ENCODE measurements at regions of chr13 and their contacts with region 1.

Region 1: DNA sequence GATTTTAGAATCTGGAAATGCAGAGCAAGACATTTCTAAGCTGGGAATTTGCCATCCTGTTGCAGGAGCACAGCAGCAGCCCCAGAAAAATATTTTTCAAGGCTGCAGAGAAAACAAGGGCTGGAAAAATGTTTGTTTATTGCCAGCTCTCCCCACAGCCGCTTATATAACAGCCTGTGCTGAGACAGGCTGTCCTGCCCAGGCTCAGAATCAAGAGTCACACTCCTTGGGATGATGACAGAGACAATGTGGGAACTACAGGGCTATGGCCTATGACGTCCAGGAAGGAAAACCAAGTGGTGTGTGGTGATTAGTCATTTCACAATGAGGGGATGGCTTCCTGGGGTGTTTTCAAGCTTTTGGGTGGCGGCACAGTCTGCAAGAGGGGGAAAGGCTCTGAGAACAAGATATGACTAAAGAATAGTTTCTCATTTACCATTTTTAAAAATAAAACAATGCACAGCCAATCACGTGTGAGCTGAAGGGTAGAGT is 136.3 kb upstream of the SERP2 start:
- DNase-seq: peak; percentile 91 to 94
- H3K4me3 ChIP-seq: no peak overlapping the region
- H3K27ac ChIP-seq: peak overlapping the region; percentile 88 to 91
- H3K4me1 ChIP-seq: peaks cover 0 to 59% (median 29%) of the 10 kb centered on the region in 4 donors
- H3K27me3 ChIP-seq: no peaks in the 10 kb centered on the region
- CTCF ChIP-seq: no peak

Region 2: DNA sequence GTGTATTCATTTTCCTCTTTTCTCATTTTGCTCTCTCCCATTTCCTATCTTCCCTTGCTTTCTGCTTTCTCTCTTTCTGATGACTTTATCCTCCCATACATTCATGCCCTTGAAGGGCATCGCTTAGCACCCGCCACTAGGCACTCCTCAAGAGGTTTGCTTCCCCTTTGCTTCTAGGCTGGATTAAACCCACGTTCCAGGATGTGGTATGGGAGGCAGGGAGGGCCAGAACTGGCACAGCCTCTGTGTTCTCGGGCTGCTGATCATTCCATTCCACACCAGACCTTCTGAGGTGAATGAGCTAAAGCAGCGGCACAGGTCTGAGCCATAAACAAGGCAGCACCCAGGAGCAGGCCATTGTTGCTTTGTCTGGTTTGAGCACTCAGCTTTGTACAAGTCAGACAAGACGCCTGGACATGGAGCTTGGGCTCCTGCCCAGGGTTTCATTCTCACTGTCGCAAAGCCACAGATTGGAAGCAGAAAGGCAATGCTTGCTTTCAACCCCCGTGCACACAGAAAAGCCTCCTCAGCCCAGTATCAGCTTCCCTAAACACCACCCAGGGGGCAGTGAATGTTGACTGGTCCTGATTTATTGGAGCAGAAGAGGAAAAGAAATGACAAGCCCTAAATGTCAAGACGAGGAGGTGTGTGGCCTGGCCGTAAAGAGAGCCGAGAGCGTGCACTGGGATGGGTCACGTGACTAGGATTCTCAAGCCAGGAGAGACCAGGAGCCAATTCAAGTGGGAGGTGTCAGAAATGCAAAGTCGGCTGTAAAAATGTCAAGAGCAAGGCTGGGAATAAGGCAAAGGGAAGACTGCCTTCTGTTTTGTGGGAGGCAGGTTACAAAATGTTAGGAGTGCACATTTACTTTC is 81.7 kb before region 1 on chr13:
- intact Hi-C with region 1: loop called (anchors 5 kb)
- DNase-seq: peak; percentile 70 to 88
- H3K4me3 ChIP-seq: peak overlapping the region; percentile 32 to 39
- H3K27ac ChIP-seq: peak overlapping the region; percentile 90 to 91
- H3K4me1 ChIP-seq: peaks cover 4 to 86% (median 56%) of the 10 kb centered on the region in 4 donors
- H3K27me3 ChIP-seq: no peaks in the 10 kb centered on the region
- CTCF ChIP-seq: no peak

Region 3: GRCh38 chr13:44300895-44301638 is 63.7 kb after region 1 on chr13:
- intact Hi-C with region 1: loop called (anchors 10 kb)
- DNase-seq: peak; percentile 35 to 77
- H3K4me3 ChIP-seq: no peak overlapping the region
- H3K27ac ChIP-seq: peak overlapping the region; percentile 61 to 72
- H3K4me1 ChIP-seq: peaks cover 0 to 65% (median 59%) of the 10 kb centered on the region in 4 donors
- H3K27me3 ChIP-seq: no peaks in the 10 kb centered on the region
- CTCF ChIP-seq: peak in 1 of 2 experiments; percentile 21